ENCODE measurements at regions of chr3 and their contacts with region 1.

Region 1: GRCh38 chr3:195863121-195864006 is 45.0 kb downstream of the TNK2 start:
- DNase-seq: no peak
- H3K4me3 ChIP-seq: no peak overlapping the region
- H3K27me3 ChIP-seq: no peaks in the 10 kb centered on the region
- CTCF ChIP-seq: peak; percentile 97

Region 2: GRCh38 chr3:195844671-195845218 is 18.6 kb before region 1 on chr3:
- CTCF ChIA-PET with region 1: interaction called, 67 read pairs
- POLR2A ChIA-PET with region 1: no interaction called
- DNase-seq: no peak
- H3K4me3 ChIP-seq: no peak overlapping the region
- H3K27me3 ChIP-seq: peaks cover 1% of the 10 kb centered on the region; the same call in 1 of the 2 replicates
- CTCF ChIP-seq: no peak

Region 3: DNA sequence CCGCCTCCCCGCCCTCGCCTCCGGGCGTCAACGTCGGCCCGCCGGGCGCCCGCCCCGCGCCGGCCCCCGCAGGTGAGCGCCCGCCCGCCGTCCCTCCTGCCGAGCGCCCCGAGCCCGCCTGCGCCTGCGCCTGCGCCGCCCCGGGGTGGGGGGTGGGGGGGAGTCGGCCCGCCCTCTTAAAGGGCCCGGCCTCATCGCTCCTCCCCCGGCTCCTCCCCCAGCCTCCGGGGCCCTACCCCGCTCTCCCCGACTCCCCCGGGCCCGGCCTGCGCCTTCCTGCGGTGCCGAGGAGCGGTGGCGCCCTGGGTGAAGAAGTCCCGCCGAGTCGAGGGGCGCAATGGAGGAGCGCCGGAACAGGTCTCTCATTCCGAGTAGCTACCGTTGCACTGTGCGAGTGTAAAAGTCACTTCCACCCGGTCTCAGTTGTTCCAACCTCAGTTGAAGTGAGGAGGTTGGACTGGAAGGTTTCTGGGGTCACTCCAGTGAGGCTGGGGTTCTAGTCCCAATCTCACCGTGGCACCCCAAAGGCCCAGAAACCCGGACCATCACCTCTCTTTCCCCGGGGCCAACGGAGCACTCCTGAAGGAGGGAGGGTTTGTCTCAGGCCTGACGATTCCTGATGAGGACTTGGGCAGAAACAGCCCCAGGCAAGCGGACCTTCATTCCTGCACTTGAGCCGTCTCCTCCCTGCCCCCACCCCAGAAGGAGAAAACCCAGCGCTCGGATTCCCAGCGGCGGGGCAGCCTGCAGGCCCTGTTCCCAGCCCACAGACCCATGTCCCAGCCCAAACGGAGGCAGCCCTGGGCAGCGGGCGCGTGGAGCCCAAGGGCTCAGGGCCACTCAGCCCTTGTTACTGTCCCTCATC is 46.5 kb after region 1 on chr3:
- CTCF ChIA-PET with region 1: interaction called, 139 read pairs
- POLR2A ChIA-PET with region 1: no interaction called
- DNase-seq: no peak
- H3K4me3 ChIP-seq: peak overlapping the region; percentile 59
- H3K27me3 ChIP-seq: no peaks in the 10 kb centered on the region
- CTCF ChIP-seq: no peak

Region 4: GRCh38 chr3:195921334-195921791 is 58.0 kb after region 1 on chr3:
- CTCF ChIA-PET with region 1: interaction called, 139 read pairs
- POLR2A ChIA-PET with region 1: no interaction called
- DNase-seq: no peak
- H3K4me3 ChIP-seq: no peak overlapping the region
- H3K27me3 ChIP-seq: peaks cover 1% of the 10 kb centered on the region
- CTCF ChIP-seq: no peak

Measured in BJ (cell line).